A549 (cell line): ENCODE measurements at regions of chr5 and their contacts with region 1.

Region 1: DNA sequence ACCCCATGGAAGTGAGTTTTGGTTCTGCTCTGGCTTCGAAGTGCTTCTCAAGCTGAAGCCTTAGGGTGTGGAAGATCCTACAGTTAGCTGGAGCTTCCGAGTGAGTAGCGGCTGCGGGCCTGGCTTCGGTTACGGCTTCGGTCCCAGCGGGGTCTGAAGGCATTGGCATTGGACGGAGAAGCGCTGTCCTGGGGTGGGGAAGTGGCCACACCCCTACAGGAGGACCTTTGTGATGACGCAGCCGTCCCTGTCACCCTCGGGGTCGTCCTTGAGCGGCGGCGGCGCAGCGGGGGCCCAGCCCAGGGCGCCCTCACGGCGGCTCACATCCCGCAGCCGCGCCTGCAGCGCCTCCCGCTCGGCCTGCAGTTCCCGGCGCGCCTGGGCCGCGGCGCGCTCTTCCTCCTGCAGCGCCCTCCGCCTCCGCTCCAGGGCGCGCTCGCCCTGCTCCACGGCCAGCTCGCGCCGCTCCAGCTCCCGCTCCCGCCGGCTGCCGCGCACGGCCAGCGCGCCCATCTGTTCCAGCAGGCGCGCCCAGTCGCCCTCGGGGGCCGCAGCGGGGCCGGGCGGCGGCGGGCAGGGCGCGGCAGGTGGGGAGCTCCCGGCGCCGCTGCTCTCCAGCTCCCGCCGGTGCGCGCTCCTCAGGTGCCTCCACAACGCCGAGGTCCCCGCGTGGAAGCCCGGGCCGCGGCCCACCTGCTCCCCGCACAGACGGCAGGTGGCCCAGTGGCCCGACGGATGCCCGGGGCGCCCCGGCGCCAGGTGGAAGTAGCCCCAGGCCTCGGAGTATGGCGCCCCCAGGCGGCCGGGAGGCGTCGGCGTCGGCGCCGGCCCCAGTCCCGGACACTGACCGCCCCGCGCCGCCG is 9.9 kb downstream of the ZBED3 start:
- DNase-seq: peak; percentile 75 to 77
- ATAC-seq: peak; percentile 92 to 96
- H3K4me3 ChIP-seq: peak overlapping the region; percentile 61
- H3K27ac ChIP-seq: peak overlapping the region; percentile 78 to 92
- H3K4me1 ChIP-seq: 0 out of 3 replicates have a peak, but pooled peaks cover 6% of the 10 kb centered on the region
- CTCF ChIP-seq: peak; percentile 97; the same call in 2 of the 3 replicates
- EP300 ChIP-seq: no peak
- POLR2A ChIP-seq: peak; percentile 22
- RAD21 ChIP-seq: peak; percentile 59 to 80

Region 2: GRCh38 chr5:76867827-76868693 is 209.1 kb before region 1 on chr5:
- CTCF ChIA-PET with region 1: interaction called, 66 read pairs
- POLR2A ChIA-PET with region 1: no interaction called
- DNase-seq: peak; percentile 55 to 79
- ATAC-seq: peak; percentile 92 to 94
- H3K4me3 ChIP-seq: no peak overlapping the region
- H3K27ac ChIP-seq: peak overlapping the region; percentile 40 to 69
- H3K4me1 ChIP-seq: peaks cover 9% of the 10 kb centered on the region; the same call in 2 of the 3 replicates
- CTCF ChIP-seq: peak; percentile 80
- EP300 ChIP-seq: no peak
- POLR2A ChIP-seq: no peak
- RAD21 ChIP-seq: peak; percentile 92 to 93

Region 3: GRCh38 chr5:76971516-76971915 is 105.7 kb before region 1 on chr5:
- CTCF ChIA-PET with region 1: no interaction called
- POLR2A ChIA-PET with region 1: no interaction called
- DNase-seq: no peak
- ATAC-seq: 0 out of 6 replicates have a peak, but pooled peaks of 1 of the 2 experiments have one; percentile 19
- H3K4me3 ChIP-seq: no peak overlapping the region
- H3K27ac ChIP-seq: no peak overlapping the region
- H3K4me1 ChIP-seq: no peaks in the 10 kb centered on the region
- CTCF ChIP-seq: no peak
- EP300 ChIP-seq: no peak
- POLR2A ChIP-seq: no peak
- RAD21 ChIP-seq: no peak

Region 4: DNA sequence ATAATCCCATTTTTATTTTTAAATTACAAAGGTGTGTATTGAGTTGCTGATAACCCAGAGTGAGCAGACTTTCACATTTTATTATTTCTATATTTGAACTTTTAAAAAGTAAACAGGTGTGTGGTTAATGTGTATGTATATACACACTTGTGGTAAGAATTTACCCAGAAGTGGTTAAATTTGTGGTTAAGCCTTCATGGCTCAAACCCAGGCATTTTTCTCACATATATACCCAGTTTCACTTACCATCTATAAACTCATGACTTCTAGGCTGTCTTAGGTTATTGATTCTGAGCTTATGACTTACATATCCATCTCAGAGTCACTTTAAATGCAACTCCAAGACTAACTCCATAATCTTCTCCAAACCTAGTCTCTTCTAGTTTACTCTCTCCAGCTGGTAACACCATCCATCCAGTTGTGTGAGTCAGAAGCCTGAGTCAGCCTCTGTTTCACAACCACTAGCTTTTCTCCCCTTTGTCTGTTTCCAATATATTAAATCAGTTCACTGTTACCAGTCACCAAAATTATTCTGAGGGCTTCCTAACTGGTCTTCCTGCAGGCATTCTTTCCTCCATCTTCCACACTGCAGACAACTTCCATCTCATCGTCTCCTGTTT is 10.3 kb before region 1 on chr5:
- CTCF ChIA-PET with region 1: interaction called, 33 read pairs
- POLR2A ChIA-PET with region 1: no interaction called
- DNase-seq: no peak
- ATAC-seq: no peak
- H3K4me3 ChIP-seq: no peak overlapping the region
- H3K27ac ChIP-seq: no peak overlapping the region
- H3K4me1 ChIP-seq: no peaks in the 10 kb centered on the region
- CTCF ChIP-seq: no peak
- EP300 ChIP-seq: no peak
- POLR2A ChIP-seq: no peak
- RAD21 ChIP-seq: no peak

Region 5: DNA sequence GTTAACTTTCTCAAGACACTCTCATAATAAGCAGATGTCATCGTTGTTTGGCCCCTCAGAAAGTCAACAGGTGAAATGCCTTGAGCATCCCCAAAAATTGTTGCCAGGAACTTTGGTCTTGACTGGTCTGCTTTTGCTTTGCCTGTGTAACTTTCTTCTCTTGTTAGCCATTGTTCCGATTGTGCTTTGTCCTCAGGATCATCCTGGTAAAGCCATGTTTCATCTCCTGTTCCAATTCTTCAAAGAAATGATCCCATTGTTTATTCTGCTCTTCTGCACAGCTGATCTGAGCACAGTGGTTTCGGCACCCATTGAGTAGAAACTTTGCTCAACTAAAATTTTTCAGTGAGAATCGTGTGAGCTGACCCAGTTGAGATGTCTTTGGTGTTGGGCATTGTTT is 18.0 kb after region 1 on chr5:
- CTCF ChIA-PET with region 1: interaction called, 58 read pairs
- POLR2A ChIA-PET with region 1: no interaction called
- DNase-seq: no peak
- ATAC-seq: no peak
- H3K4me3 ChIP-seq: no peak overlapping the region
- H3K27ac ChIP-seq: no peak overlapping the region
- H3K4me1 ChIP-seq: no peaks in the 10 kb centered on the region
- CTCF ChIP-seq: no peak
- EP300 ChIP-seq: no peak
- POLR2A ChIP-seq: no peak
- RAD21 ChIP-seq: no peak

Region 6: GRCh38 chr5:77101298-77101697 is 24.1 kb after region 1 on chr5:
- CTCF ChIA-PET with region 1: interaction called, 16 read pairs
- POLR2A ChIA-PET with region 1: no interaction called
- DNase-seq: no peak
- ATAC-seq: peak; percentile 50 to 62; a peak in 3 of 6 replicates
- H3K4me3 ChIP-seq: no peak overlapping the region
- H3K27ac ChIP-seq: no peak overlapping the region
- H3K4me1 ChIP-seq: peaks cover 6% of the 10 kb centered on the region; the same call in 1 of the 3 replicates
- CTCF ChIP-seq: no peak
- EP300 ChIP-seq: no peak
- POLR2A ChIP-seq: no peak
- RAD21 ChIP-seq: no peak

Region 7: DNA sequence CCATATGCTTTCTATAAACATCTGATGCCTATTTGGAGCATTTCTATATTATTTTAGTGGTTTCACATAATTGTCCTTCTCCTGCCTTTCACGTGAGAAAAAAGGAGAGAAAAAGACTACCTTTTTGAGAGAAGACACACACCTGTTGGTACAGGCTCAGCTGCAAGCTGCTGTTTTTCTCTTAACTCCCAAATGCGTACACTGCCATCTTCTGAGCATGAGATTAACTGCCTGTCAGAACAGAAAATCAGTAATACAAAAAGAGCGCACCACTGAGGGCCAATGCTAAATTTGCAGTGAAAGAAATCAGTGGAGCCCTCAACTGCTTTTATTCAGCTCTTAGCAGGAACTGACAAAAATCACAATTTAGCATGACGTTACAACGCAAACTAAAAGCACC is 360.0 kb after region 1 on chr5:
- CTCF ChIA-PET with region 1: interaction called, 10 read pairs
- POLR2A ChIA-PET with region 1: no interaction called
- DNase-seq: peak in 1 of 2 experiments; percentile 43
- ATAC-seq: peak; percentile 39 to 65; a peak in 3 of 6 replicates
- H3K4me3 ChIP-seq: no peak overlapping the region
- H3K27ac ChIP-seq: no peak overlapping the region
- H3K4me1 ChIP-seq: no peaks in the 10 kb centered on the region
- CTCF ChIP-seq: peak; percentile 51
- EP300 ChIP-seq: no peak
- POLR2A ChIP-seq: no peak
- RAD21 ChIP-seq: peak; percentile 54 to 60

Region 8: DNA sequence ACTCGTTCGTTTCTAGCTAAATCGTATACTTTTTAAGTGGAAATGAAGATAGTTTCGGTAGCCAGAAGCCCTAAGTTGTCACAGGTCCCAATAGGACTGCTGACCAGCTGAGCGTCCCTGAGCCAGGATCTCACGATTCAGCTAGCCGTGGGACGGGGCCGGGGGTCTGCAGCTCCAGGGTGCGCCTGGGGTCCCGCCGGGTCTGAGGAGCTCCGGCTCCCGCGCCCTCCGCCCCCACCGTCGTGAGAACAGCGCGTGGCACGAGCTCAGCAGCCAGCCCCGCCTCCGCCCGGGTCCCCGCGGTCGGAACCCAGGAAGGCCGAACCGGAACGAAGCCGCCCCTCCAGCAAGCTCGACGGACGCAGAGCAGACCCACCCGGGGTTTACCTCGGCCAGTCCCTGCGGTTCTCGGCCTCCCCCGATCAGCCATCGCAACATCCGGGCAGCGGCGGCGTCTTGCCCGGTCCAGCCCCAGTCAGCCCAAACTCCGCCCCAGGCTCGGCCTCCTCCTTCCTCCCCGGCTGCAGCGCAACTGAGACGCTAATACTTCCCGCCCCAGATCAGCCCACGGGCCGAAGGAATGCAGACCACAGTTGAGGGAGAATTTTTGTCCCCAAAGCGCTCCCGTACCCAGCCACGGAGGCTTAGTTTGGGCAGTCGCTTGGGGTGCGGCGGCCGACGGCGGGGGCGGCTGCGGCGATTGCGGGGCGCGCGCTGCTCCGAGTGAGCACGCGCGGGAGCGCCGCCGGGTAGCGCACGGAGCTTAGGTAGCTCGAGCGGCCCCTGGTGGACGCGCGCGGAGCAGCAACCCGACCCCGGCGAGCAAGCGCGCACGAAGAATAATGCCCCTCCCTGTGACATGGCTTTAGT is 414.8 kb after region 1 on chr5 and contains the start of gene WDR41:
- CTCF ChIA-PET with region 1: interaction called, 23 read pairs
- POLR2A ChIA-PET with region 1: interaction called, 12 read pairs
- DNase-seq: peak; percentile 78 to 92
- ATAC-seq: peak; percentile 98
- H3K4me3 ChIP-seq: peak within 1 kb of the TSS; percentile 61
- H3K27ac ChIP-seq: peak within 1 kb of the TSS; percentile 83 to 97
- H3K4me1 ChIP-seq: peaks cover 13% of the 10 kb centered on the region; the same call in 2 of the 3 replicates
- CTCF ChIP-seq: peak; percentile 89
- EP300 ChIP-seq: no peak
- POLR2A ChIP-seq: peak; percentile 56
- RAD21 ChIP-seq: peak; percentile 58 to 79
- polyA plus RNA-seq, gene WDR41: 88.5 and 89.5 TPM in 2 replicates